PC-9 (cell line): ENCODE measurements at regions of chr11 and their contacts with region 1.

Region 1: GRCh38 chr11:32429477-32429876 is 5.9 kb downstream of the WT1 start:
- DNase-seq: no peak
- H3K4me3 ChIP-seq: no peak overlapping the region
- H3K27ac ChIP-seq: no peak overlapping the region
- H3K4me1 ChIP-seq: no peaks in the 10 kb centered on the region
- H3K27me3 ChIP-seq: no peaks in the 10 kb centered on the region; the same call in 1 of the 2 replicates
- CTCF ChIP-seq: no peak

Region 2: DNA sequence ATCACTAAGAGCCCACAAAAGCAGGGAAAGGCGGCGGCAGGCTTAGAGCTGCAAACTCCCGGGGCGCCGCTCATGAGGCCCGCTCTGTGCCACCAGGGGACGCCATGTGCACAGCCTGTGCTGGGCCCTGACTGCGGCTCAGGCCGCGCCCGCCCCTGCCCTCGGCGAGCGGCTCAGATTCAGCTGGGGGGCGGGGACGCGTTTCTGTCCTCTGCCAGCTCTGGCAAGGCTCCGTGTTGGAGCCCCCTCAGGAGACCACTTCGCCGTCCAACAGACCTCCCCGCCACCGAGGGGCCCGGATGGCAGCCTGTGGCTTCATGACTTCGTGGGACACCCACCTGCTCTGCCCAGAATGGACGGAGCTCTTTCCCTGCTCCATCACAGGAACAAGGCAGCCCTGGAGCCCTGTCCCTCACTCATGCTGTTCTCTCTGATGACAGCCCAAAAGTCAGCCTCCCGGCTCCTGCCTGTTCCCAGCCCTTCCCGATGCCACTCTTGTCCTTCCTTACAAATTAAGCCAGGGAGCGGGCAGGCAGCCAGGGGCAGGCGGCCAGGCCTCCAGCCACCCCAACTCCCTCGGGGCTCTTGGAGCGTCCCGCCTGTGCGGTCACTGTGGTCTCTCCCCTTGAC is 1745.0 kb after region 1 on chr11:
- CTCF ChIA-PET with region 1: interaction called, 10 read pairs
- POLR2A ChIA-PET with region 1: no interaction called
- intact Hi-C with region 1: no loop called
- DNase-seq: peak; percentile 53 to 85
- H3K4me3 ChIP-seq: peak overlapping the region; percentile 40; the same call in 1 of the 2 replicates
- H3K27ac ChIP-seq: no peak overlapping the region
- H3K4me1 ChIP-seq: peaks cover 8% of the 10 kb centered on the region
- H3K27me3 ChIP-seq: no peaks in the 10 kb centered on the region
- CTCF ChIP-seq: peak; percentile 92